Activated naive CD4-positive, alpha-beta T cell treated with anti-CD3 and anti-CD28 coated beads, Interleukin-2, amount 10 ng/mL, durations not matched to agents 7 days and 5 days (primary cell): ENCODE measurements at regions of chr11 and their contacts with region 1.

Region 1: DNA sequence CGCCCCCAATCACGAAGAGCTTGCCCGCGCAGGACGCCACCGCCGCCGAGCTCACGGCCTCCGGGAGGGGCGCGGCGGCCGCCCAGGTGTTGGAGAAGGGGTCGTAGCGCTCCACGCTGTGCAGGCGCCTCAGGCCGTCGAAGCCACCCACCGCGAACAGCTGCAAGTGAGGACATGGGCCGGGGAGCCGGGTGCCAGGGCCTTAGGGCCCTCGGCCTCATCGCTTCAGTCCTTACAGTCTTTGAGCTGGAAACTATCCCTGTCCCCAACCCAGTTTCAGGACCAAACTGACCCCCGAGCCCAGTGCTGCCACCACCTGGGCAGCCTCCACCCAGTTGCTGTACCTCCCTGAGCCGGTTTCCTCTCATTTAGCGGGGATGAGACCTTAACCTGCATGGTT is 7.6 kb downstream of the KLHL35 start:
- DNase-seq: no peak
- H3K4me3 Mint-ChIP-seq: no peak overlapping the region
- H3K27ac Mint-ChIP-seq: no peak overlapping the region
- H3K4me1 Mint-ChIP-seq: peaks cover 16% of the 10 kb centered on the region
- H3K27me3 Mint-ChIP-seq: peaks cover 37% of the 10 kb centered on the region

Region 2: DNA sequence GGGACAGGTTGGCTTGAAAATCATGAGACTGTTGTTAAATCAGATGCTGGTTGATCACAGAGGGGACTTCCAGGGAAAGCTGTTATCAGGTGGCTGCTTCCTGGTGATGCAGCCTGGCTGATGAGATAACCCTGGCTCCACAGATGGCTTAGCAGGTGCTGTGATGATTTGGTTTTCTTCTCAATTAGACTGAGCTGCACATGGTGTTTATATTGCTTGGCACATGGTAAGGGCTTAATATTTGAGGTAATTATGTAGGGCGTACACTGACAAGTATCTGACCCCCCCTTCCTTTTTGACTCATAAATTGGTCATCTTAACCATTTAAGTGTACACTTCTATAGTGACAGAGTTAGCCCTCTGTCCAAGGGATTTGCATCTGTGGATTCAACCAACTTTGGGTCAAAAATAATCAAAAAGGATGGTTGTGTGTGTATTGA is 19.1 kb before region 1 on chr11:
- CTCF ChIA-PET with region 1: interaction called, 16 read pairs
- DNase-seq: no peak
- H3K4me3 Mint-ChIP-seq: no peak overlapping the region
- H3K27ac Mint-ChIP-seq: no peak overlapping the region
- H3K4me1 Mint-ChIP-seq: peaks cover 39% of the 10 kb centered on the region
- H3K27me3 Mint-ChIP-seq: no peaks in the 10 kb centered on the region

Region 3: DNA sequence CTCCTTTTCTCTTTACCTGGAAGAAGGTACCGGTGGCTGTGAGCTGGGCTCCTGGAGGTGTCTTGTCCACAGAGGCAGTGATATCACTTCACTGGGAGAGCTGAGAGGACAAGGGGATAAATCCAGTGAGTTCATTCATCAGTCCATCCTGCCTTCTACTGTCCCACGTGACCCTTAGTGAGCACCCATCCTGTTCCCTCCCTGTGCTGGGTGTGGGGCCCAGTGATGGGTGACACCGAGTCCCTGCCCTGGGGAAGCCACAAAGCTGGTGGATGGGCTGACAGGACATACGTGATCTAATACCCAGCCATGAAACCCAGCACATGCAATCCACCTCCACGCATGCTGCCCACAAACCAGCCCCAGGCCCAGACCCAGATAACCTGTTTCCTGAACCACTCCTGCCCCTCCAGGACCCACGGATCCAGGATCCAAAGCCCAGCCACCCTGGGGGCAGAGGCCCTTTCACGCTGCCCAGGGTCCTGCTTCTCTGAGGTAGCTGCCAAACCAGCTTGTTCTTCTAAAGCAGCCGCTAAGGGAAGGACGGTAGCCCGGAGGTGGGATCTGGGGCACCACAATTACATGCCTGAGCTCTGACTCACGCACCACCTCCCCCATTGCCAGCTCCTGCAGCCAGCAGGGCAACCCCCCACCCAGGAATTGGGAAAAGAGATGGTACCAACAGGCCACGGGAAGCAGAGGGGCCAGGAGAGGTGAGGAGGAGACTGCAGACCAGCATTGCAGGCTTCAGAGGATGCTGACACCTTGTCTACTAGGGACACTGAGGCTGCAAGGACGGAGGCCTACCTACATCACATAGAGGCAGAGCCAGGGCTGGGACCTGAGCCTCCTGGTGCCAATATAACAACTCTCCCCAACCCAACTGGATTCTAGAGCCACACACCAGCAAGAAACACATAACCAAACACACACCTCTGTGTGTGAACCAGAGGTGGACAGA is 65.1 kb after region 1 on chr11:
- CTCF ChIA-PET with region 1: no interaction called
- DNase-seq: no peak
- H3K4me3 Mint-ChIP-seq: no peak overlapping the region
- H3K27ac Mint-ChIP-seq: peak overlapping the region; percentile 39
- H3K4me1 Mint-ChIP-seq: peaks cover 26% of the 10 kb centered on the region
- H3K27me3 Mint-ChIP-seq: no peaks in the 10 kb centered on the region